PC-3 (cell line): ENCODE measurements at regions of chr6 and their contacts with region 1.

Region 1: DNA sequence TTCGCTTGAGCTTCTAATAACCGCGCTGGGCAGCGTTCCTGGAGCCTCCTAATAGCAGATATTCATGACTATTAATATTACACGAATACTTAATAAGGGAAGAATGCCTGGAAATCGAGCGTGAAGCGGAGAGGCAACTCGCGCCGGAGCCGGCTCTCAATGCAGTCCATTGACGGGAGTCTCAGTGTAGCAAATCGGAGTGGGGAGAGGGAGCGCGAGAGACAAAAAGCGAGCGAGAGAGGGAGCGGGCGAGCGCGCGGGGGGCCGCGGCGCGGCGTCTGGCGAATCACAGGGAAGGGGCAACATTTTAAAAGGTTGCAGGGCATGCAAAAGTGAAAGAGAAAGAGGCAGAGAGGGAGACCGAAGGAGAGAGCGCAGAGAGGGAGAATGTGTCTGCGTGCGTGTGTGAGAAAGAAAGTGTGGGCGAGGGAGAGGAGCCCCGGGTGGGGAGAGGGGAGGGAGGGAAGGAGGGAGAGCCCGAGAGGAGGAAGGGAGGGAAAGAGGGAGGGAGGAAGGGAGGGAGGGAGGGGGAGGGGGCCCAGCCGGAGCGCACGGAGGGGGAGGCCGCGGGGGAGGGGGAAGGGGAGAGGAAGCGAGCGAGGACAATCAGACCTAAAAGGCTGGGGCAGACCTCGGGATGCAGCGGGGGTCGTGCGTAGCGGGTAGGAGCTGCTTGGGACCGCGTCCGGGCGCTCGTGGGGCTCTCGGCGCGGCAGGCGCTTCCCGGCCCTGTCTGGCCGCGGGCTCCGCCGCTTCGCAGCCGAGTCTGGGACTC is 2.7 kb downstream of the TFAP2A start:
- DNase-seq: peak; percentile 84
- ATAC-seq: peak; percentile 25
- H3K4me3 ChIP-seq: peak overlapping the region; percentile 91
- H3K27ac ChIP-seq: peak overlapping the region; percentile 98
- H3K4me1 ChIP-seq: peaks cover 34% of the 10 kb centered on the region
- H3K27me3 ChIP-seq: no peaks in the 10 kb centered on the region
- CTCF ChIP-seq: no peak

Region 2: DNA sequence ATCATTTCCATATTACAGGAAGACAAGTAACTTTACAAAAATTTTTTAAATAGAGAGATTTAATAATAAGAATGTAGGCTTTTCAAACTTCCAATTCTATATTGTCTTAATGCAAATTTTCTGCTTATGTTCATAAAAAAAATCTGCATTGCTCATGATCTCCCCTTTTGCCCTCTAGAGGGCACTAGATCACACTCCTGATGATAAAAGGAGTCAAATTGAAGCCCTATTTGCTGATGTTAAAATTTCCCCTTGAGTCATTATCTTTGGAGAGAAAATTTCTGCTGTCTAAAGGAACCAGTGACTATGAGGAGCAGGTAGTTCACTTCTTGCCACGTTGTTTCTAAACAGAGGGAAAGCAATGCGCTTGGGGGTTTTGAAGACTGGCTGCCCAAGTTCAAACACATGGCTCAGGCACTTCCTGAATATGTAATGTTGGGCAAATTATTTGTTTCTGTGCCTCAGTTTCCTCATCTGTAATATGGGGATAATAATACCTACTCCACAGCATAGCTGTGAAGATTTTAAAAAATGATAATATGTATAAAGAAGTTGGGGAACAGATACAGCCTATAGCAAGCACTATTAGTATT is 871.5 kb before region 1 on chr6:
- CTCF ChIA-PET with region 1: no interaction called
- POLR2A ChIA-PET with region 1: no interaction called
- intact Hi-C with region 1: loop called (anchors 5 kb)
- DNase-seq: peak; percentile 81
- ATAC-seq: peak; percentile 31; the same call in 1 of the 2 replicates
- H3K4me3 ChIP-seq: no peak overlapping the region
- H3K27ac ChIP-seq: no peak overlapping the region
- H3K4me1 ChIP-seq: no peaks in the 10 kb centered on the region
- H3K27me3 ChIP-seq: no peaks in the 10 kb centered on the region
- CTCF ChIP-seq: peak; percentile 83

Region 3: GRCh38 chr6:10146723-10147451 is 265.3 kb before region 1 on chr6:
- CTCF ChIA-PET with region 1: no interaction called
- POLR2A ChIA-PET with region 1: interaction called, 16 read pairs
- intact Hi-C with region 1: loop called (anchors 10 kb)
- DNase-seq: peak; percentile 49
- ATAC-seq: peak; percentile 56
- H3K4me3 ChIP-seq: peak overlapping the region; percentile 55
- H3K27ac ChIP-seq: no peak overlapping the region
- H3K4me1 ChIP-seq: peaks cover 3% of the 10 kb centered on the region; the same call in 1 of the 2 replicates
- H3K27me3 ChIP-seq: peaks cover 18% of the 10 kb centered on the region; the same call in 1 of the 2 replicates
- CTCF ChIP-seq: no peak

Region 4: DNA sequence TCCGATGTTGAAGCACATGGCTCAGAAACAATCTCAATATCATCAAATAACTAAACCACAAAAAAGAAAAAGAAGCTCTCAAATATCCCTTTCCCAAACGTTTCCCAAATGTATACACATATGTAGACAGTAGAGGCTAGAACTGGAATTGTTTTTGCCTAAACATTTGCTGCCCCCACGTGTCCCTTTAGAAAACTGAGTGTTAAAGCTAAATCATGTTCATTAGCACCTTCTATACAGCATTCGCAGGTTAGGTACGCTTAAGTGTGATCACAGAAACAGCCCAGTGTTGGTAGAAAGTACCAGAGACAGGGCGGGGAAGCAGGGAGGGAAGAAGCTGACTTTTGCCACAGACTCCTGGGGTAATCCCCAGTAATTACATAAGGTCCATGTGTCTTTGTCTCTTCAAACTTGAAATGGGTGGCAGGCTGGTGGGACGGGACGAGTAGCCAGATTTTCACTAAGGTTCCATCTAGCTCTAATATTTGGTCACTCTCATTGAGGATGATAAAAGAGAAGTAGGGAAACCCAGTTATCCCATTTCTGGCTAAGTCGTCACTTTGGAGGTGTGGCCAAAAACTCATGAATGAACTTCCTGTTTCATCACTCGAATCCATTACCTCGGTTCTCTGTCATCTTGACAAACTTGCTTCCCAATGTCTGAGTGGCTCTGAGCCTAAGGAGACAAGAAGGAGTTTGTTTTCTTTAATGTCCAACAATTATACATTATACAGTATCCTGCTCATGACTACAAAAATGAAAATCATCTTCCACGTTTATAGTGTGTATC is 17.7 kb after region 1 on chr6:
- CTCF ChIA-PET with region 1: interaction called, 22 read pairs
- POLR2A ChIA-PET with region 1: interaction called, 6 read pairs
- intact Hi-C with region 1: no loop called
- DNase-seq: peak; percentile 75
- ATAC-seq: peak; percentile 92
- H3K4me3 ChIP-seq: peak overlapping the region; percentile 60
- H3K27ac ChIP-seq: no peak overlapping the region
- H3K4me1 ChIP-seq: peaks cover 20% of the 10 kb centered on the region
- H3K27me3 ChIP-seq: no peaks in the 10 kb centered on the region
- CTCF ChIP-seq: peak; percentile 90

Region 5: GRCh38 chr6:11033825-11034224 is 621.7 kb after region 1 on chr6:
- CTCF ChIA-PET with region 1: no interaction called
- POLR2A ChIA-PET with region 1: interaction called, 10 read pairs
- intact Hi-C with region 1: no loop called
- DNase-seq: peak; percentile 78
- ATAC-seq: peak; percentile 94
- H3K4me3 ChIP-seq: no peak overlapping the region
- H3K27ac ChIP-seq: no peak overlapping the region
- H3K4me1 ChIP-seq: peaks cover 16% of the 10 kb centered on the region
- H3K27me3 ChIP-seq: no peaks in the 10 kb centered on the region
- CTCF ChIP-seq: no peak